ENCODE measurements at regions of chr7 and their contacts with region 1.

Region 1: DNA sequence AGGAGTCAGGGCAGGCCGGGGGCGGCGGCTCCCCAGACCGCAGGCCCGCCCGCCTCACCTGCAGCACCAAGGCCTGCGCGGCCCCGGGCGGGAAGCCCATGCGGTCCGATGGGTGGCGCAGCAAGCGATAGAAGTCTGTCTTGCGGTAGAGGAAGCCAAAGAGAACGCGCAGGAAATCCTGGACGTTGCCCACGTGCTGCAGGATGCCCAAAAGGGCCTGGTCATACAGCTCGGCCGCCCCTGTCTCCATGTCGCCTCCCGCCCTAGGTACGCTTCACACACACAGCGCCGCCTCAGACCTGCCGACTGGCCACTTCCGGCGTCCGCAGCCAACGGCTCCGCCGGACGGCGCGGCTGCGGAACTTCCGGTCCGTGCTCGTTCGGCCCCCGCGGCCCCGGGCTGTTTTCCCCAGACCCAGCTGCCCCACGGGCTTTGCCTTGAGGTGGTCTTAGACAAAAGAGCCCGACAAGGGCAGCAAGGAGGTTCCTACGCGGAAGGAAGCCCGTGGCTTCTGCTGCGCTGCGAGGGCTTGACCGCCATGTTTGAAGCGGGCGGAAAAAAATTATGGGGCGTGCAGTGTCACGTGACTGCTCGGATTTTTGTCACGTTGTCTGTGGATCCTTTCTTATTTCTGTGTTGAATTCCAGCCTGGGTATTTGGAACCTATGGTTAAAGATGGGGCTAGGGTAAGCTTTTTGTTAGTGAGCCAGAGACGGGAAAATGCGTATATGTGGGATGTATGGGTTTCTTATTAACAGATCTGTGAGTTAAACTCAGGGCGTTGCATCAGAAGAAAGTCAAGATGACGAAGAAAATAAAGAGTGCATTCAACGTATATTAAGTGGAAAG is at the start of gene NUDCD3:
- DNase-seq: peak; percentile 63 to 88 (median 84)
- ATAC-seq: peak; percentile 84
- H3K4me3 ChIP-seq: peak within 1 kb of the TSS; percentile 92
- H3K4me3 Mint-ChIP-seq: peak within 1 kb of the TSS; percentile 85 to 96 (median 90)
- H3K27ac ChIP-seq: peak within 1 kb of the TSS; percentile 98
- H3K27ac Mint-ChIP-seq: peak within 1 kb of the TSS; percentile 90 to 97 (median 93)
- H3K4me1 ChIP-seq: peaks cover 28 to 30% of the 10 kb centered on the region in 2 donors
- H3K4me1 Mint-ChIP-seq: peaks cover 36 to 53% (median 48%) of the 10 kb centered on the region in 7 donors
- H3K27me3 ChIP-seq: peaks cover 0 to 3% of the 10 kb centered on the region in 2 donors
- H3K27me3 Mint-ChIP-seq: peaks cover 0 to 11% (median 3%) of the 10 kb centered on the region in 5 donors
- total RNA-seq, gene NUDCD3: 79.4 to 117 (median 91.0) TPM

Region 2: DNA sequence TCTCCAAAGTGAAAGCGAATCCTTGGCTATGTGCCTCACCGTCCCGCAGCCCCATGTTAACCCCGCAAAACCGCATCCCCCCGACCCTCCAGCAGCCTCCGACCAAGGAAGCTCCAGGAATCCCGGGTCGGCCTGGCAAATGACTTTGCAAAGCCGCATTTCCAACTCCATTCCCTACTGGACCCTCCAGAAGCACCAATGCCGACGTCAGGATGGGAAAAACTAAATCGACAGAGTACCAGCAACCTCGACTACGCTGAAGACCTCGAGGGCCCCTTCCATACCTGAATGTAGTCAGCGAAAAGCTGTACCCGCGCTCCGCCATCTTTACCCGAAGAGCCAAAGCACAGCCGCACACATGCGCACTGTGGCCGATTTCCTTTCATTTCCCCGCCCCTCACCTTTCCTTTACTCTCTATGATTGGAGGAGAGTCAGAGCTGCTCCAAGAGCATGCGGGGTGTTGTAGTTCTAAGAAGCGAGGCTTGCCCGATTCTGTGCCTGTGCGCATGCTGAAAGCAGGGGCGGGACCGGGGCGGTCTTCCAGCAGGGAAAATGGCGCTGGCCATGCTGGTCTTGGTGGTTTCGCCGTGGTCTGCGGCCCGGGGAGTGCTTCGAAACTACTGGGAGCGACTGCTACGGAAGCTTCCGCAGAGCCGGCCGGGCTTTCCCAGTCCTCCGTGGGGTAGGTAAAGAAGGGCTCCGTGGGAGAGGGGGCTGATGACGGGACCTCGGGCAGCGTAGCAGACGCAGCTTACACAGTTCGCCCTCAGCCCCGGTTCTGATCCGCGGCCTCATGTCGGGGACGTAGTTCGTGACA is 1558.5 kb before region 1 on chr7 and contains the starts of genes MRPL32 and PSMA2:
- CTCF ChIA-PET with region 1: no interaction called
- POLR2A ChIA-PET with region 1: no interaction called
- intact Hi-C with region 1: loop called in 1 of 2 experiments (anchors 1 kb)
- DNase-seq: peak; percentile 83 to 97 (median 94)
- ATAC-seq: peak; percentile 99
- H3K4me3 ChIP-seq: peak within 1 kb of the TSS; percentile 100
- H3K4me3 Mint-ChIP-seq: peak within 1 kb of the TSS; percentile 88 to 100 (median 98)
- H3K27ac ChIP-seq: peak within 1 kb of the TSS; percentile 89
- H3K27ac Mint-ChIP-seq: peak within 1 kb of the TSS; percentile 92 to 100 (median 97)
- H3K4me1 ChIP-seq: peaks cover 24 to 48% of the 10 kb centered on the region in 2 donors
- H3K4me1 Mint-ChIP-seq: peaks cover 31 to 93% (median 71%) of the 10 kb centered on the region in 7 donors
- H3K27me3 ChIP-seq: no peaks in the 10 kb centered on the region
- H3K27me3 Mint-ChIP-seq: no peaks in the 10 kb centered on the region
- total RNA-seq, gene MRPL32: 27.7 to 58.2 (median 53.4) TPM
- total RNA-seq, gene PSMA2: 29.3 to 144 (median 35.3) TPM

Region 3: GRCh38 chr7:44200647-44201461 is 289.7 kb before region 1 on chr7 and contains the start of gene YKT6:
- CTCF ChIA-PET with region 1: no interaction called
- POLR2A ChIA-PET with region 1: interaction called, 7 read pairs
- intact Hi-C with region 1: loop called (anchors 1 kb)
- DNase-seq: peak; percentile 73 to 94 (median 93)
- ATAC-seq: peak; percentile 99
- H3K4me3 ChIP-seq: peak within 1 kb of the TSS; percentile 95
- H3K4me3 Mint-ChIP-seq: peak within 1 kb of the TSS; percentile 81 to 90 (median 85)
- H3K27ac ChIP-seq: peak within 1 kb of the TSS; percentile 91
- H3K27ac Mint-ChIP-seq: peak within 1 kb of the TSS; percentile 19 to 88 (median 63)
- H3K4me1 ChIP-seq: peaks cover 15 to 16% of the 10 kb centered on the region in 2 donors
- H3K4me1 Mint-ChIP-seq: peaks cover 24 to 38% (median 32%) of the 10 kb centered on the region in 7 donors
- H3K27me3 ChIP-seq: no peaks in the 10 kb centered on the region
- H3K27me3 Mint-ChIP-seq: peaks cover 0 to 7% (median 3%) of the 10 kb centered on the region in 5 donors
- total RNA-seq, gene YKT6: 58.1 to 80.9 (median 62.3) TPM

Region 4: DNA sequence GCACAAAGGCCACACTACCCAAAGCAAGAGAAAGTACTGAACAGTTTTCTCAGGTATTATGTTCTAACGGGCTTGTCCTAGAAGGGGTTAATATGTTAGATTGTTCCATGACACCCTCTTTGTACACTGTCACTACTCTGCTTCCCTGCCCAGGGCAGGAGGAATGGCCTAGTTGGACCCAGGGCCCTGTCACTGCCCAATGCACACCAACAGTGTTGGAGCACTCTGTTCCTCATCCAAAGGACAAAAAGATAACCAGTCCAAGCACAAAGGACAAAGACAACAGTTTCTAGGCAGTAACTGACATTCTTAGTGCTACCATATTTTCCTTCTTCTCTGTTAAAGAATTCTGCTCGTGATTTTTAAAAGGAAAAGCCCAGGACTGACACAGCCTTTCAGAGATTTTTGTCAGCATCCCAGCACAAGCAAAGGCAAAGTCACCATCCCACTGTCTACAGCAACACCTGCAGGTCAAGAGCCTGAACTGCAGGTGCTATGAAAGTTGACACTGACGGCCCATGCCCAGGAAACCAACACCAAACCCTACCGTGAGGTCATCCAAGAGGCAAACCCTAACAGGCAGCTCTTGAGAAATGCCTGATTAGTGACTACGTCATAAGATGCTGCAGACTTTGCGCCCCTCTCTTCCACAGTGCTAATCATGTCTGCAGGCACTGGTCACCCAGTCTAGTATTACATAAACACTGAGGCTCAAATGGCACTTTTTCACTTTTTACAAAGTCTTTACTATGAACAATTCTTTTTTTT is 13.3 kb before region 1 on chr7:
- CTCF ChIA-PET with region 1: no interaction called
- POLR2A ChIA-PET with region 1: interaction called, 16 read pairs
- intact Hi-C with region 1: no loop called
- DNase-seq: peak; percentile 18 to 68 (median 58)
- ATAC-seq: peak; percentile 98
- H3K4me3 ChIP-seq: no peak overlapping the region
- H3K4me3 Mint-ChIP-seq: peak overlapping the region in 5 of 10 donors; percentile 1 to 32 (median 4)
- H3K27ac ChIP-seq: no peak overlapping the region
- H3K27ac Mint-ChIP-seq: peak overlapping the region in 7 of 9 donors; percentile 2 to 93 (median 78)
- H3K4me1 ChIP-seq: peaks cover 0 to 15% of the 10 kb centered on the region in 2 donors
- H3K4me1 Mint-ChIP-seq: peaks cover 26 to 86% (median 71%) of the 10 kb centered on the region in 7 donors
- H3K27me3 ChIP-seq: no peaks in the 10 kb centered on the region
- H3K27me3 Mint-ChIP-seq: no peaks in the 10 kb centered on the region

Region 5: GRCh38 chr7:44581879-44582603 is 91.5 kb after region 1 on chr7 and contains the start of gene TMED4:
- CTCF ChIA-PET with region 1: no interaction called
- POLR2A ChIA-PET with region 1: interaction called, 22 read pairs
- intact Hi-C with region 1: loop called in 1 of 2 experiments (anchors 1 kb)
- DNase-seq: peak; percentile 100
- ATAC-seq: peak; percentile 96
- H3K4me3 ChIP-seq: peak within 1 kb of the TSS; percentile 95
- H3K4me3 Mint-ChIP-seq: peak within 1 kb of the TSS; percentile 86 to 97 (median 92)
- H3K27ac ChIP-seq: peak within 1 kb of the TSS; percentile 90
- H3K27ac Mint-ChIP-seq: peak within 1 kb of the TSS; percentile 95 to 99 (median 98)
- H3K4me1 ChIP-seq: peaks cover 14 to 19% of the 10 kb centered on the region in 2 donors
- H3K4me1 Mint-ChIP-seq: peaks cover 13 to 43% (median 38%) of the 10 kb centered on the region in 7 donors
- H3K27me3 ChIP-seq: no peaks in the 10 kb centered on the region
- H3K27me3 Mint-ChIP-seq: peaks cover 0 to 12% (median 0%) of the 10 kb centered on the region in 5 donors
- total RNA-seq, gene TMED4: 70.0 to 98.5 (median 95.3) TPM

Region 6: DNA sequence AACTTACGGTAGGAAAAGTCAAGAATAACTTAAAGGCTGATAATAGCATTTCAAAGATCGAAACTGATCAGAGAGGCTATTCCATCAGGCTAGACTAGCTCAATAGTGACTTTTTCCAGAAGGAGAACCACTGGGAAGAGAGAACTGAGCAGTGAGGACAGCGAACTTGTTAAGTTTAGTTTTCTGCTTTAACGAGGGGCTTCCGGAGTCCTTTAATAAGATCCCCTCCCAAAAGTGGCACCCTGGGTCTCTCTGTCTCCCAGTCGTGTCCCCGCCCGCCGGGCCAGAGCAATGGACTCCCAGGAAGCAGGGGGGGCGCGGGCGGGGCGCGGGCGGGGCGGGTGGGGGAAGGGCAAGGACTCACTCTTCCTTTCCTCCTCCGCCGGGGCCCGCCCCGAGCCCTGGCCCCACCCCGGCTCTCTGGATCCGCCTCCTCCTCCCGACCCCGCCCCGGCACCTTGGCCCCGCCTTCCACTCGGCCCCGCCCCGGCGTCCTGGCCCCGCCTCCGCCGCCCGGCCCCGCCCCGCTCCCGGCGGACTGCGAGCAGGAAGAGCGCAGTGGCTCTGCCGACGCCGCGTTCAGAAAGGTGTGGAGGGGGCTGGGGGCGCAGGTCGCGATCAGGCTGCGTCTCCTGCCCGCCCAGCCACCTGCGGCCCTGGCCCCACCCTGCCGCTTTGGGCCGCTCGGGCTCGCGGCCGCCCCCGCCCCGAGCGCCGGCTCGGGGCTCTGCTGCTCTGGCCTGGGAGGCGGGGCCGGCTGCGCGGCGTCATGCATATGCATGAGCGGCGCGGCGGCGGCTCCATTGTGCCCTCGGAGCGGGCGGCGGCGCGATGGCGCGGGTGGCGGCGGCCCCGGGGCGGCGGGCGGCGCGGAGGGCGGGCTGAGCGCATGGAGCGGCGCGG is 257.7 kb after region 1 on chr7 and contains the start of gene ZMIZ2:
- CTCF ChIA-PET with region 1: no interaction called
- POLR2A ChIA-PET with region 1: interaction called, 3 read pairs
- intact Hi-C with region 1: loop called in 1 of 2 experiments (anchors 1 kb)
- DNase-seq: peak; percentile 87 to 99 (median 93)
- ATAC-seq: peak; percentile 94
- H3K4me3 ChIP-seq: peak within 1 kb of the TSS; percentile 64
- H3K4me3 Mint-ChIP-seq: peak within 1 kb of the TSS; percentile 77 to 92 (median 88)
- H3K27ac ChIP-seq: peak within 1 kb of the TSS; percentile 98
- H3K27ac Mint-ChIP-seq: peak within 1 kb of the TSS; percentile 81 to 98 (median 92)
- H3K4me1 ChIP-seq: peaks cover 21 to 22% of the 10 kb centered on the region in 2 donors
- H3K4me1 Mint-ChIP-seq: peaks cover 22 to 63% (median 45%) of the 10 kb centered on the region in 7 donors
- H3K27me3 ChIP-seq: no peaks in the 10 kb centered on the region
- H3K27me3 Mint-ChIP-seq: no peaks in the 10 kb centered on the region
- total RNA-seq, gene ZMIZ2: 108 to 187 (median 144) TPM

Region 7: DNA sequence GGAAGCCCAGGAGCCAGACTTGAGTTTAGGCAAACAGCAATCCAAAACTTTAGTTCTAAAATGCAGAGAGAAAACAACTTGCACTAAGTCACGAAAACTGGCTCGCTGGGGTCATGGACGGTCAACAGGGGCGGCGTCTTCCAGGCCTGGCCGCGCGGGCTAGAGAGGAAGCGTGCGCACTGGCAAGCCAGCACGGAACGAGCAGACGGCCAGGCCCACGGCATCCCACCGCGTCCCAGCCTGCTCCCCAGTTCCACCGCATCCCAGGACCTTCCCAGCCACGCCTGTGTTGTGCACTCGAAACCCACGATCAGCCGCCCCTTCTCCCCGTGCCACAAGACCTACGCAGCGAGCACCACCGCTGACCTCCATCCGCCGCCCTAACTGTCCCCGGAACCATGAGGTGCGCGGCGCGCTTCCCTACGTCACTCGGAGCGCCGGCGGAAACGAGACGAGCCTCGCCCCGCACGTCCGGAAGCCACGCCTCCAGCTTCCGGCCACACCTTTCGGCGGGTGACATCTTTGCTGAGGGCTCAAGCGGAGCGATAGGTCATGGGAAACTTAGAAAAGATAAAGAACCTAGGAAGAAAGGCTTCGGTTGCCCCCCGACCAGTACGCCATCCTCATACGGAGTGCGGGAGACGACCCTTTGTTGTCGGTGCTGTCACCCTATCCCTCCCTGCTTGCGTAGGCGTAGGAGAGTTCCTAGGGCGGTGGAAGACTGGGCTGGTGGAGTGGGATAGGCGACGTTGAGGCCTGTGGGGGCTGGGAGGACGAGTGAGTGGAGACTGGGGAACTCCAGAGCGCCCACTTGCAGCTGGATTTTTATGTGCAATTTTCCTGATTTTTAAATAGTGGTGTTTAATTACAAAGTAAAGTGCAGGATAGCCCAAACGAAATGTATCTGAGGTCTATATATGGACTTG is 621.0 kb after region 1 on chr7 and contains the start of gene TBRG4:
- CTCF ChIA-PET with region 1: no interaction called
- POLR2A ChIA-PET with region 1: interaction called, 3 read pairs
- intact Hi-C with region 1: loop called (anchors 1 kb)
- DNase-seq: peak; percentile 88 to 96 (median 94)
- ATAC-seq: peak; percentile 94
- H3K4me3 ChIP-seq: peak within 1 kb of the TSS; percentile 80
- H3K4me3 Mint-ChIP-seq: peak within 1 kb of the TSS; percentile 93 to 100 (median 96)
- H3K27ac ChIP-seq: peak within 1 kb of the TSS; percentile 98
- H3K27ac Mint-ChIP-seq: peak within 1 kb of the TSS; percentile 98 to 100 (median 99)
- H3K4me1 ChIP-seq: peaks cover 17 to 45% of the 10 kb centered on the region in 2 donors
- H3K4me1 Mint-ChIP-seq: peaks cover 30 to 59% (median 50%) of the 10 kb centered on the region in 7 donors
- H3K27me3 ChIP-seq: no peaks in the 10 kb centered on the region
- H3K27me3 Mint-ChIP-seq: peaks cover 0 to 31% (median 0%) of the 10 kb centered on the region in 5 donors
- total RNA-seq, gene TBRG4: 93.7 to 143 (median 107) TPM